ENCODE measurements at regions of chr6 and their contacts with region 1.

Region 1: DNA sequence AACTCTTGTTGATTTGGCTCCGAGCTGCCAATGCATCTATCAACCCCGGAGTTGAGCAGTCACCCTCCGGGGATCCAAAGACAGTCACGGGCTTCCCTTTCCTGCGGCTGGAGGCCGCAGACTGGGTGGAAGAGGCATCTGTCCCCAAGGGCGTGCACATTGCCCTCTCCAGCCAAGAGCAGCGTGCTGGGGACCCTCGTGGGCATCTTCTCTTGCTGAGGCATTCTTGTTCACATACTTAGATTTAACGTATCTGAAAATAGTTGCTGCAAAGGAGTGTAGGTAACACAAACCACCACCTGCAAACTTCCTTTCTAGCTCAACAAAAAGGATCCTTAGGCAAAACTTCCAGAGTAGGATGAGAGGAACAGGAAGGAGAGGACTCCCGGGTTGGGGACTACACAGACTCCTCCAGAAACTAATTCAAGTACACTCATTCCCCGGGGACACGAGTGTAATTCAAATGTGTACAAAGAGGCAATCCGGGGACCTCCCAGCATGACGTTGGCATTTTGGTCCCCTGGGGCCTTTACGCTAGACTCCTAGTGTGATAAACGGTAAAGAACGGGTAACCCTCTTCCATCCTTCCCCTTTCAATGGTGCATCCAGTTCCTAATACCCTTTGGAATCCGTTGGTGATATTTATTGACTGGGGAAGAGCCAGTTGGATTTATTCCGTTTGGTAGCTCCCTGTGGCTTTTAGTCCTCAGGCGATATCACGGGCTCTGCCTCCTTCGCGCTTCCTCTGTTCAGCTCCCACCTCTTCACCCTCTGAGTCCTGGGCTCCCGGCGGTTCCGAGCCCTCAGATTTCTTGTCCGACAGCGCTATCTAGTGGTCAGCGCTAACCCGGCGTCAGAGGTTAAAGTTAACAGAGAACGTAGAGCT is 2.7 kb upstream of the COL12A1 start:
- DNase-seq: peak; percentile 66
- ATAC-seq: peak; percentile 60
- H3K4me3 ChIP-seq: no peak overlapping the region
- H3K27ac ChIP-seq: no peak overlapping the region
- H3K4me1 ChIP-seq: peaks cover 8 to 23% of the 10 kb centered on the region in 2 experiments
- H3K27me3 ChIP-seq: no peaks in the 10 kb centered on the region
- CTCF ChIP-seq: peak; percentile 80 to 97 (median 87); a peak in 5 of 6 replicates
- POLR2A ChIP-seq: no peak
- RAD21 ChIP-seq: peak; percentile 95

Region 2: GRCh38 chr6:73739096-73739495 is 1469.4 kb before region 1 on chr6:
- CTCF ChIA-PET with region 1: interaction called, 39 read pairs
- POLR2A ChIA-PET with region 1: interaction called, 3 read pairs
- RAD21 ChIA-PET with region 1: interaction called, 5 to 7 read pairs
- intact Hi-C with region 1: loop called (anchors 2 kb)
- DNase-seq: peak; percentile 52
- ATAC-seq: peak; percentile 67
- H3K4me3 ChIP-seq: no peak overlapping the region
- H3K27ac ChIP-seq: no peak overlapping the region
- H3K4me1 ChIP-seq: no peaks in the 10 kb centered on the region; a peak in 1 of 4 replicates
- H3K27me3 ChIP-seq: no peaks in the 10 kb centered on the region
- CTCF ChIP-seq: peak; percentile 64 to 86 (median 71); a peak in 5 of 6 replicates
- POLR2A ChIP-seq: no peak
- RAD21 ChIP-seq: peak; percentile 84

Region 3: DNA sequence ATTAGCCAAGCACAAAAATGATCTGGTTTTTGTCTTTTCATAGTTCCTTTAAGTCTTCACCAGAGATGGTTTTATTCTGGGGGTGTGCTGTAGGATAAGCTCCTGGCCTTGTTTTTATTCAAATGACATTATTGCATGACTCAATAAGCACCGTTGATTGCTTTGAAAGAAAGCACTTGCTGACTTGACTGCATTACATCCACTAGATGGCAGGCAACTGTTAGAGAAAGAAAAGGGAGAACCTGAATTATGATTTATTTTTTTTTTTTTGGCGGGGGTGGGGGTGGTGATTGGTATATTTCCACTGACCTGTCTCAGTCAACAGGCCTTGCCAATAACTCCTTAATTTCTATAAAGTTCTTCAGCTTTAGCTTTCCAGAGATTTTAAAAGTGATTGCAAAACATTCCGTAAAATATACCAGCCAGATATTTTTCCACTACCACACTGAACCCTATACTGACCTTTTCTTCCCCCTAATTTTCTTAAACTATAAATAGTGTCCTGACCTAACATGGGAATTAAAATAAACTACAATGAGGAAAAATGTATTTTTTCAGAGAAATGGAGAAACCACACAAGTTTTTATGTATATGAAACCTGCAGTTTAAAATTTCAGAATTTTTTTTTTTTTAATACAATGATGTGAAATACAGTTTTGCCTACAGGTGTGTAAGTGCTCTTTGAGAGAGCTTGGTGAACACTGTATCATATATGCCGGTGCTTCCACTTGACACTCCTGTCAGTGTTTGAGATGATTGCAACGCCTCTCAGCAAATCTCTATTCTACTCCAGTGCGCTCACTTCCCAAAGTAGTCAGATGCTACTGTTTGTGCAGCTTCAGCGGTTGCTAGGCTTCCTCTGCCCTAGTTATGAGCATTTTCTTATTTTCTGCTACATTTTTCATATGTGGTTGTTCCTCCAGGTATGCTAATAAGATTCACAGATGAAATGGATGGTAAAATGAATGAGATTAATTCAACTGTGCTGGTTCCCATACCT is 1238.3 kb before region 1 on chr6:
- CTCF ChIA-PET with region 1: interaction called, 11 read pairs
- POLR2A ChIA-PET with region 1: no interaction called
- RAD21 ChIA-PET with region 1: interaction called in 1 of 2 experiments, 3 read pairs
- intact Hi-C with region 1: loop called (anchors 2 kb)
- DNase-seq: peak; percentile 74
- ATAC-seq: peak; percentile 78
- H3K4me3 ChIP-seq: no peak overlapping the region
- H3K27ac ChIP-seq: no peak overlapping the region
- H3K4me1 ChIP-seq: peaks cover 0 to 5% of the 10 kb centered on the region in 2 experiments; a peak in 2 of 4 replicates
- H3K27me3 ChIP-seq: no peaks in the 10 kb centered on the region
- CTCF ChIP-seq: peak; percentile 63 to 84 (median 64)
- POLR2A ChIP-seq: no peak
- RAD21 ChIP-seq: peak; percentile 82

Region 4: DNA sequence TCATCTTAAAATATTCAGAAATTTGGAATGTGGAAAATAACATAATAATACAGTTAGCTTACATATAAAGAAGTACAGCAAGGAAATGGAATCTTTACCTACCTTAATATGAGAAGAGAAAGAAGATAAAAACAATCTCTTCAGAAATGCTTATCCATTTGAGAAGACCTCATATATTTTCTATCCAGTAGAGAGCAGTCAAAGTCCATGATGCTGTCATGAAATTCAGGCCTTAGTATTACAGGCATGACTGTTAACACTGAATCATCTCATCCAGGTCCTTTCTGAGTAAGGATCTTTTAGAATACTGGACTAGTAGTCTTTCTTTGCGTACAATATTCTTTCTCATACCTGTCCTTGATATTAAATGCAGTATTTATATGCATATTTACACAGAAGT is 799.1 kb before region 1 on chr6:
- CTCF ChIA-PET with region 1: interaction called, 25 read pairs
- POLR2A ChIA-PET with region 1: no interaction called
- RAD21 ChIA-PET with region 1: interaction called in 1 of 2 experiments, 4 read pairs
- intact Hi-C with region 1: loop called (anchors 1 kb)
- DNase-seq: peak; percentile 31
- ATAC-seq: peak; percentile 76
- H3K4me3 ChIP-seq: no peak overlapping the region
- H3K27ac ChIP-seq: no peak overlapping the region
- H3K4me1 ChIP-seq: no peaks in the 10 kb centered on the region
- H3K27me3 ChIP-seq: no peaks in the 10 kb centered on the region
- CTCF ChIP-seq: peak; percentile 21 to 58 (median 58); a peak in 4 of 6 replicates
- POLR2A ChIP-seq: no peak
- RAD21 ChIP-seq: peak; percentile 84

Region 5: GRCh38 chr6:74899416-74899815 is 309.1 kb before region 1 on chr6:
- CTCF ChIA-PET with region 1: interaction called, 12 read pairs
- POLR2A ChIA-PET with region 1: no interaction called
- RAD21 ChIA-PET with region 1: interaction called in 1 of 2 experiments, 3 read pairs
- intact Hi-C with region 1: loop called (anchors 1 kb)
- DNase-seq: no peak
- ATAC-seq: no peak
- H3K4me3 ChIP-seq: no peak overlapping the region
- H3K27ac ChIP-seq: no peak overlapping the region
- H3K4me1 ChIP-seq: no peaks in the 10 kb centered on the region
- H3K27me3 ChIP-seq: no peaks in the 10 kb centered on the region
- CTCF ChIP-seq: peak in 2 of 3 experiments; percentile 19 to 22; a peak in 1 of 6 replicates
- POLR2A ChIP-seq: no peak
- RAD21 ChIP-seq: peak; percentile 53; the same call in 1 of the 2 replicates

Region 6: GRCh38 chr6:75130784-75131183 is 77.8 kb before region 1 on chr6:
- CTCF ChIA-PET with region 1: no interaction called
- POLR2A ChIA-PET with region 1: no interaction called
- RAD21 ChIA-PET with region 1: no interaction called
- intact Hi-C with region 1: no loop called
- DNase-seq: no peak
- ATAC-seq: no peak
- H3K4me3 ChIP-seq: no peak overlapping the region
- H3K27ac ChIP-seq: no peak overlapping the region
- H3K4me1 ChIP-seq: no peaks in the 10 kb centered on the region
- H3K27me3 ChIP-seq: no peaks in the 10 kb centered on the region
- CTCF ChIP-seq: no peak
- POLR2A ChIP-seq: no peak
- RAD21 ChIP-seq: no peak

Region 7: DNA sequence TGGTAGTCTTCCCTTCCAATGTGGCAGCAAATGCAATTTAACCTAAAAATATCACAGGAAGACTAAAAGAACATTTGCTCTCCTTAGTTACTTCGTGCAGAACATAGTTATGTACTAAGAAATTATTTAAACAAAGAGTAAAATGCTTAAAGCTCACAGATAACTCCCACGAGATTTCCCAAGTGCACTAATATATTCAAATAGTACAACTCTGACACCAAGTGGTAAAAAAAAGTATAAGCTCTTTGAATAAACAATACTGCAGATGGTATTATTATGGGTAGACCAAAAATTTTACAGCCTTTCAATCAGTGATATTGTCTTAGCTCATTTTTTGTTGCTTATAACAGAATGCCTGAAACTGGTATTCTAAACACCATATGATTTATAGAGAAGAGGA is 337.8 kb after region 1 on chr6:
- CTCF ChIA-PET with region 1: interaction called, 11 read pairs
- POLR2A ChIA-PET with region 1: no interaction called
- RAD21 ChIA-PET with region 1: interaction called in 1 of 2 experiments, 3 read pairs
- intact Hi-C with region 1: no loop called
- DNase-seq: no peak
- ATAC-seq: peak; percentile 72
- H3K4me3 ChIP-seq: no peak overlapping the region
- H3K27ac ChIP-seq: no peak overlapping the region
- H3K4me1 ChIP-seq: no peaks in the 10 kb centered on the region
- H3K27me3 ChIP-seq: no peaks in the 10 kb centered on the region
- CTCF ChIP-seq: peak; percentile 6 to 41 (median 30); a peak in 3 of 6 replicates
- POLR2A ChIP-seq: no peak
- RAD21 ChIP-seq: peak; percentile 52; the same call in 1 of the 2 replicates